Activated B cell treated with CpG ODN at 0.5 μM for 24 hours (primary cell): ENCODE measurements at regions of chr18 and their contacts with region 1.

Region 1: GRCh38 chr18:9913526-9914333 is at the start of gene VAPA:
- DNase-seq: peak; percentile 94
- ATAC-seq: peak; percentile 81
- H3K4me3 Mint-ChIP-seq: peak within 1 kb of the TSS; percentile 93
- H3K27ac Mint-ChIP-seq: peak within 1 kb of the TSS; percentile 93
- H3K4me1 Mint-ChIP-seq: peaks cover 28% of the 10 kb centered on the region
- H3K27me3 Mint-ChIP-seq: peaks cover 6% of the 10 kb centered on the region
- CTCF ChIP-seq: no peak
- total RNA-seq, gene VAPA: 114 and 124 TPM in 2 replicates

Region 2: DNA sequence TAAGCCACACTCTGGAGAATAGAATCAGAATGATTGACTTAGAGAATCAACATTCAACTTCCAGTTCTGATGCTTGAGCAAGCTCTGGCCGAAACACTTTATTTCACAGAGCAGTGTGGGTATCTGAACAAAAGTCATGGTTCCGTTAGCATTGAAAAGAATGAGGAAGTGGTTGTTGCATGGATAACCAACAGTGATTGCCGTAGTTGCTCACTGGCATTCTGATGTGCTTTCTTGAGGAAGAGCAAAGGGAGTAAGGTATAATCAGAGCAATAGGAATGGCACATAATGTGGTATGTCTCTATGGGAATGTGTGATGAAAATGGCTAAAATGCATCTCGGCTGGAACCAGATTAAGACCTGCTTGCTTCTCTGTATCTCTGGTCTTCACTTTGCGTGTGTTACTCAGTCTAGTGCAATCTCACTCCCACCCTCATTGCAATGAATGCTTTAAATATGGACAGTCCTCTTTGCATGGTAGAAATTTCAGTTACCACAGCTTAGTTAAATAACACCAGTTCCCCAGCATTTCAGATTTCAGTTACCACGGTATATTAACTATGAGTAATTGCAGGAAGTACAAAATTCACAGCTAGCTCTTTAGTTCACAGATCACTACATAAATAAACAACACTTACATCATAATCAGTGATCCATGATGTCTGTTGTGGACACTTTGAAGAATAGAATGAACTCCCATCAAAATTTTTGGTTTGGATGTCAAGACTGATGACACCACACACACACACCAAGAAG is 1312.3 kb before region 1 on chr18:
- CTCF ChIA-PET with region 1: no interaction called
- POLR2A ChIA-PET with region 1: interaction called, 4 read pairs
- intact Hi-C with region 1: loop called (anchors 5 kb)
- DNase-seq: no peak
- ATAC-seq: peak; percentile 75
- H3K4me3 Mint-ChIP-seq: peak overlapping the region; percentile 40
- H3K27ac Mint-ChIP-seq: peak overlapping the region; percentile 87
- H3K4me1 Mint-ChIP-seq: peaks cover 57% of the 10 kb centered on the region
- H3K27me3 Mint-ChIP-seq: no peaks in the 10 kb centered on the region
- CTCF ChIP-seq: no peak

Region 3: GRCh38 chr18:9136315-9137155 is 777.2 kb before region 1 on chr18 and contains the start of gene ANKRD12:
- CTCF ChIA-PET with region 1: no interaction called
- POLR2A ChIA-PET with region 1: interaction called, 3 read pairs
- intact Hi-C with region 1: loop called (anchors 5 kb)
- DNase-seq: peak; percentile 98
- ATAC-seq: peak; percentile 75
- H3K4me3 Mint-ChIP-seq: peak within 1 kb of the TSS; percentile 98
- H3K27ac Mint-ChIP-seq: peak within 1 kb of the TSS; percentile 99
- H3K4me1 Mint-ChIP-seq: peaks cover 62% of the 10 kb centered on the region
- H3K27me3 Mint-ChIP-seq: no peaks in the 10 kb centered on the region
- CTCF ChIP-seq: no peak
- total RNA-seq, gene ANKRD12: 121 and 125 TPM in 2 replicates

Region 4: GRCh38 chr18:9614401-9615279 is 299.1 kb before region 1 on chr18 and contains the start of gene PPP4R1:
- CTCF ChIA-PET with region 1: no interaction called
- POLR2A ChIA-PET with region 1: interaction called, 7 read pairs
- intact Hi-C with region 1: loop called (anchors 1 kb)
- DNase-seq: peak; percentile 74
- ATAC-seq: peak; percentile 68
- H3K4me3 Mint-ChIP-seq: peak within 1 kb of the TSS; percentile 86
- H3K27ac Mint-ChIP-seq: peak within 1 kb of the TSS; percentile 90
- H3K4me1 Mint-ChIP-seq: peaks cover 26% of the 10 kb centered on the region
- H3K27me3 Mint-ChIP-seq: no peaks in the 10 kb centered on the region
- CTCF ChIP-seq: no peak
- total RNA-seq, gene PPP4R1: 48.1 and 51.3 TPM in 2 replicates

Region 5: GRCh38 chr18:9933865-9934264 is 20.1 kb after region 1 on chr18:
- CTCF ChIA-PET with region 1: no interaction called
- POLR2A ChIA-PET with region 1: no interaction called
- intact Hi-C with region 1: loop called (anchors 2 kb)
- DNase-seq: no peak
- ATAC-seq: no peak
- H3K4me3 Mint-ChIP-seq: no peak overlapping the region
- H3K27ac Mint-ChIP-seq: no peak overlapping the region
- H3K4me1 Mint-ChIP-seq: peaks cover 18% of the 10 kb centered on the region
- H3K27me3 Mint-ChIP-seq: no peaks in the 10 kb centered on the region
- CTCF ChIP-seq: no peak

Region 6: GRCh38 chr18:11851146-11851805 is 1937.5 kb after region 1 on chr18 and contains the start of gene CHMP1B:
- CTCF ChIA-PET with region 1: no interaction called
- POLR2A ChIA-PET with region 1: no interaction called
- intact Hi-C with region 1: loop called (anchors 5 kb)
- DNase-seq: peak; percentile 98
- ATAC-seq: peak; percentile 94
- H3K4me3 Mint-ChIP-seq: peak within 1 kb of the TSS; percentile 100
- H3K27ac Mint-ChIP-seq: peak within 1 kb of the TSS; percentile 99
- H3K4me1 Mint-ChIP-seq: peaks cover 52% of the 10 kb centered on the region
- H3K27me3 Mint-ChIP-seq: no peaks in the 10 kb centered on the region
- CTCF ChIP-seq: no peak
- total RNA-seq, gene CHMP1B: 28.5 and 29.4 TPM in 2 replicates